ENCODE measurements at regions of chr9 and their contacts with region 1.

Region 1: GRCh38 chr9:136849038-136849959 is at the start of gene PHPT1:
- DNase-seq: peak; percentile 99
- total RNA-seq, gene PHPT1: 296 TPM

Region 2: DNA sequence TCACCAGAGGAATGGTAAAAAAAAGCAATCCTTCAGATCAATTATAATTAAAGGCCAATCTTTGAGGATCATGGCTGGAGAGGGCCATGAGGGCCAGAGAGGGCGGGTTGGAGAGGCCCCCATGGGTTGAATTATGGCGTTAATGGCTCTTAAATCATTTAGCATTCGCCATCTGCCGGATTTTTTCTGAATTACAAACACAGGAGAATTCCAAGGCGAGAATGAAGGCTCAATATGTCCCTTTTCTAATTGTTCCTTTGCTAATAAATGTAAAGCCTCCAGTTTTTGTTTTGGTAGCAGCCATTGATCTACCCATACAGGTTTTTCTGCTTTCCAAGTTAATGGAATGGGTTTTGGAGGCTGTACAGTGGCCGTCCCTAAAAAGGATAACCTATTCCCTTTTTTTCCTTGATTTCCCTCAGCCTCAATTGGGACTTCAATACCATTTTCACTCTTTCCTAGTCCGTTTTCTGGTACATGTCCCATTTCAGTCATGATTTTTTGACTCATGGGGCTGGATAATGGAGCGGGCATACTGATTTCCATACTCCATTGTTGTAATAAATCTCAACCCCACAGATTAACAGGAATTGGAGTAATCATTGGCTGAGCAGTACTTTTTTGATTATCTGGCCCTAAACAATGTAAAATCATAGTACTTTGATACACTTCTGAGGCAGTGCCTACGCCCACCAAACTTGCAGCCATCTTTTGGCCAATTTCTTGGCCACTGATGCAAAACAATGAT is 64.9 kb before region 1 on chr9:
- intact Hi-C with region 1: no loop called
- DNase-seq: no peak

Region 3: DNA sequence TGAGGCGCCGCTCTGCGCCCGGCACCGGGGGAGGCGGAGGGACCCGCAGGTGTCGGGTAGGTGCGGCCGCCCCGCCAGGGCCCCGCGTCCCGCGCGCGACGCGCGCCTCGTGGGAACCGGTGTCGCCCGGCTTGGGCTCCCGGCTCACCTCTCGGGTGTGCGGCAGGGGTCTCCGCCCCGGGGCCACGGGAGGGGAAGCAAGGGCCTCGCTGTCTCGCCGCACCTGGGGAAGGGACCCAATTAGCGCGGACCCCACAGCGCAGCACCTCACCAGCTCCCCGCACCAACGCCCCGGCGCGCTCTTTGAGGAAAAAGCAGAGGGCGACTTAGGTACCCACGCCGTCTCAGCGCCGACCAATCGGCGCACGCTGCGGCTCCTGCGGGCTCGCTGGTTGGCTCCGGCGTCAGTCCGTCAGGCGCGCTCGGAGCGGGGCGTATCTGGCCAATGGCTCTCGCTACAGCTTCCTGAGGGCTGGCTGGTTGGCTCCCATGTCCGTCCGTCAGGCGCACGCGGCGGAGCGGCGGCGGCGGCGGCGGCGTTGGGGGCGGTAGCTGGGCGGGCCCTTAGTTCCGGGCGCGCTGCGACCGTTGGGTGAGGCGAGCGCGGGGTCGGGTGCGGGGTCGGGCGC is 36.8 kb after region 1 on chr9 and contains the start of gene TRAF2:
- intact Hi-C with region 1: loop called (anchors 2 kb)
- DNase-seq: peak; percentile 99
- total RNA-seq, gene TRAF2: 10.2 TPM

Region 4: DNA sequence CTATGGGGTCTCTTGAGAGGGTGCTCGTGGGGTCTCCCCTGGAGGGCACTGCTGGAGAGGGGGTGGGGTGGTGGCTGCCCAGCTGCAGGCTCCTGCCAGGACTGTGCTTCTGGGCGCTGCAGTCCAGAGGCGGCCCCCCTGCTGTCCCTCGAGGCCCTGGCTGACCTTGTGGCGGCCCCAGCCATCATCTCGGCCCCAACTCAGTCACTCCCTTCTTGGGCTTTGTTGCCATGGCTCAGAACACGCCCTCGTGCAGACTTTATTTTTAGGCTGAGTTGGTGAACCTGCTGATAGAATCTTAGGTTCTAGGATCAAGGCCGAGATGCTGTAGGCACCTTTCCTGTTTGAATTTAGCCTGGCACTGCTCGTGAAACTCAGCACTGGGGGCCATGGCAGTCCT is 72.4 kb after region 1 on chr9:
- intact Hi-C with region 1: loop called (anchors 1 kb)
- DNase-seq: no peak